ENCODE measurements at regions of chr4 and their contacts with region 1.

Region 1: GRCh38 chr4:53987761-53988171 is 76.6 kb downstream of the CHIC2 start:
- DNase-seq: no peak
- ATAC-seq: no peak
- H3K4me3 ChIP-seq: no peak overlapping the region
- H3K27ac ChIP-seq: no peak overlapping the region
- H3K4me1 ChIP-seq: no peaks in the 10 kb centered on the region
- H3K27me3 ChIP-seq: no peaks in the 10 kb centered on the region
- CTCF ChIP-seq: no peak
- POLR2A ChIP-seq: no peak

Region 2: DNA sequence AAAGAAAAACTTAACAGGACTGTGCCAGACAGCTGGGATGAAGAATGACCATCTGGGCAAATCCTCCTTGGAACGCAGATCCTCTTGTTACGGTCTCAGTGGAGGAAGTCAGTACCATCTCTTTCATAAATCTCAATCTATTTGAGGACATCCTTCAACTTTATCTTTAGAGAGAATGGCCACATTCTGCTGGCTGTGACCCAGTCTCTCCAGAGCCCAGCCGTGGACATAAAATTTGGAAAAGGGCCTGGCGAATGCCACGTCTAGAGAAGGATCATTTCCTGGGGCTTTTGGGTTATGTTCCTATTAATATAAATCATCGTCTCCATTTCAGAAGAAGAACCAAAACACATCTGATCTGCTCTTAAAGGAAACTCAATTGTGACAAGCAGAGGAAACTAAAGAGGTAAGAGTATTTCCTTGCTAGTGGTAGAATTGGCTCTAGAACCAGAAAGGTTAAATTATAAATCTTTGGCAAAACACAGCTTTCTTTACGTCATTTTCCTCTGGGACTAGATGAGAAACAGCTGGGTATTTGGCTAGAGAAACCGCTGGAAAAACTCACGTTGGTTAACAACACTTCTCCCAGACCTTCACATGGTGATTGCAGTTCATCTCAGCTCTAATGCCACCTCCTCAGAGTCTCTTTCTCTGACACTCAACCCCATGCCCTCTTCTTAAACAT is 88.0 kb before region 1 on chr4:
- in situ Hi-C with region 1: loop called in 1 of 4 experiments (anchors 25 kb)
- intact Hi-C with region 1: no loop called
- DNase-seq: no peak
- ATAC-seq: peak in 1 of 2 donors; percentile 26
- H3K4me3 ChIP-seq: no peak overlapping the region
- H3K27ac ChIP-seq: no peak overlapping the region
- H3K4me1 ChIP-seq: peaks cover 0 to 4% of the 10 kb centered on the region in 2 donors
- H3K27me3 ChIP-seq: peaks cover 0 to 14% (median 3%) of the 10 kb centered on the region in 3 donors
- CTCF ChIP-seq: no peak
- POLR2A ChIP-seq: no peak

Region 3: DNA sequence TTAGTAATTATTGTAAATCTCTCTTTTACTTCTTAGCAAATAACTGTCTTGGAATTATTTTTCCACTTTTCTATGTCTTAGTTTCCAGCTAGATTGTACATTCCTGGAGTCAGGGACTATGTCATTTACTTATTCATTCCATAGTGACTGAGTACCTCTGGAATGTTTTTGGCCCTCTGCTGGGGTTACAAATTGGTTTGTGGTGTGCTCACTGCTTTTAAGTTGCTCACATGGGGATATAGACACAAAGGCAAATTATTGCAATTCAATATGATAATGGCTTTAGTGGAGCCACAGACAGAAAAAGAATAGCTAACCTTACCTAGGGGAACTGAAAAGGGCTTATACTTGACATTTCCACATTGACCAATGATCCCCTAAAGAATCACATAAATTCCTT is 177.7 kb after region 1 on chr4:
- in situ Hi-C with region 1: no loop called
- intact Hi-C with region 1: loop called (anchors 1 kb)
- DNase-seq: no peak
- ATAC-seq: no peak
- H3K4me3 ChIP-seq: no peak overlapping the region
- H3K27ac ChIP-seq: no peak overlapping the region
- H3K4me1 ChIP-seq: no peaks in the 10 kb centered on the region
- H3K27me3 ChIP-seq: no peaks in the 10 kb centered on the region
- CTCF ChIP-seq: no peak
- POLR2A ChIP-seq: no peak

Measured in gastrocnemius medialis (tissue), 4 donors.